ENCODE measurements at regions of chr17 and their contacts with region 1.

Region 1: GRCh38 chr17:38421171-38421841 is 7.0 kb upstream of the ARHGAP23 start:
- H3K4me3 ChIP-seq: no peak overlapping the region
- H3K27ac ChIP-seq: no peak overlapping the region
- H3K4me1 ChIP-seq: no peaks in the 10 kb centered on the region; the same call in 1 of the 2 replicates
- CTCF ChIP-seq: no peak

Region 2: DNA sequence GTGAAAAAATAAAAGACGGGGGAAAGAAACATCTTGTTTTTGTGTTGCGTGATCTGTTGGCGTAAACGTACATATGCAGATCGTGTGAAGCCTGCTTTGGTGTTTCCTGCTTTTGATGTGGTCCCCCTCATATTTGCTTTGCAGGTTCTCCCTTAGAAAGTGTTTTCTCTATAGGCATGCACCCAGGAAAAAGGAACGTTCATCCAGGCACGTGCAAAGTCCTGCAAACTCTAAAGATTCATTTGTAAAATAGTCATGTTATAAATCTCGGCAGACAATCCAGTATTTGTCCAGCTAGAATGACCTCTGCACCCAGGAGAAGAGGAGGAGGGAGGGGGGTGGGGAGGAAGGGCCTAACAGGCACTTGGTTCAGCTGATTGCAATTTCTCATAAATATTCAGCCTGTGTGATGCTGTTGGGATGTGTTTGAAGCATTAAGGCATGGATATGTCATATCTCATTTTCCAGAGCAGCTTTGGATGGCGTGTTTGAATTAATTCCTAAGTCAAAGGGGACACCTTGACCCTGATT is 737.8 kb before region 1 on chr17:
- CTCF ChIA-PET with region 1: no interaction called
- POLR2A ChIA-PET with region 1: no interaction called
- H3K4me3 ChIP-seq: no peak overlapping the region
- H3K27ac ChIP-seq: no peak overlapping the region
- H3K4me1 ChIP-seq: no peaks in the 10 kb centered on the region
- CTCF ChIP-seq: no peak

Region 3: DNA sequence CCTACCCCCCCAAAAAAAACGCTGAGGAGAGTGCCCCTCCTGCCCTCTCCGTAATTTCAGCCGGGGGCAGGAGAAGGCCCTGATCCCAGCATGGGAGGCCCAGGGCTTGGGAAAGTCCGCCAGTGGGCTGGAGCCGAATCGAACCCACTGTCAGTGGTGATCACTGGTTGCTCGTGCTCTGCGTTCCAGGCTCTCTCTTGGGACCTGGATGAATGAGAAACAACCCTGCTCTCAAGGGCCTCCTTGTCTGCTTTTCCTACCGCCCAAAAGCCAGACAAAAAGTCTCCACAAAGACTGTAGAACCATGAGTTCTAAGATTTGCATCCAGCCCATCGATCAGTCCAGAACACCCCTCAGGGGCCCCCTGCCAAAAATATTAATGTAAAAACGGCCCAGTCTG is 15.1 kb after region 1 on chr17:
- CTCF ChIA-PET with region 1: interaction called, 52 read pairs
- POLR2A ChIA-PET with region 1: interaction called, 4 read pairs
- H3K4me3 ChIP-seq: no peak overlapping the region
- H3K27ac ChIP-seq: no peak overlapping the region
- H3K4me1 ChIP-seq: no peaks in the 10 kb centered on the region
- CTCF ChIP-seq: no peak

Region 4: GRCh38 chr17:38454516-38454915 is 33.2 kb after region 1 on chr17:
- CTCF ChIA-PET with region 1: interaction called, 10 read pairs
- POLR2A ChIA-PET with region 1: no interaction called
- H3K4me3 ChIP-seq: no peak overlapping the region
- H3K27ac ChIP-seq: no peak overlapping the region
- H3K4me1 ChIP-seq: peaks cover 9% of the 10 kb centered on the region
- CTCF ChIP-seq: no peak

Region 5: GRCh38 chr17:38469875-38470274 is 48.6 kb after region 1 on chr17:
- CTCF ChIA-PET with region 1: interaction called, 15 read pairs
- POLR2A ChIA-PET with region 1: no interaction called
- H3K4me3 ChIP-seq: no peak overlapping the region
- H3K27ac ChIP-seq: no peak overlapping the region
- H3K4me1 ChIP-seq: peaks cover 8% of the 10 kb centered on the region; the same call in 1 of the 2 replicates
- CTCF ChIP-seq: no peak

Region 6: DNA sequence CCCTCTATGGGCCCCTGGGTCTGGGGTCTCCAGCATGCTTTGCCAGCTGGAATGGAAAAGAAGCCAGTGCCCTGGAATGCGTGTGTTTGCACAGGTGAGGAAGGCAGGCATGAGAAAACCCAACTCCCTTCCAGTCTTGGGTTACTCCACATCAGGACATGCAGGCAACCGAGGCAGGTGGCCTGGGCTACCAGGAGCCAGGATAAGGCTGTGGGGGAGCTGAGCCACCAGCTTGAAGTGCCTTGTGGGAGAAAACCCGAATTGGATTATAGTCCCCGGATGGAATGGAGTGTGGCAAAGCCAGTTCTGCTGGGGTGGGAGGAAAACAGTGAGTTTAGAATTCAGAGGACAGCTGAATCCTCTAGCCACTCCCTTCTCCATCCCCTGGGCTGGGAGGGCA is 177.2 kb after region 1 on chr17:
- CTCF ChIA-PET with region 1: no interaction called
- POLR2A ChIA-PET with region 1: no interaction called
- H3K4me3 ChIP-seq: no peak overlapping the region
- H3K27ac ChIP-seq: no peak overlapping the region
- H3K4me1 ChIP-seq: peaks cover 18% of the 10 kb centered on the region
- CTCF ChIP-seq: no peak

Region 7: DNA sequence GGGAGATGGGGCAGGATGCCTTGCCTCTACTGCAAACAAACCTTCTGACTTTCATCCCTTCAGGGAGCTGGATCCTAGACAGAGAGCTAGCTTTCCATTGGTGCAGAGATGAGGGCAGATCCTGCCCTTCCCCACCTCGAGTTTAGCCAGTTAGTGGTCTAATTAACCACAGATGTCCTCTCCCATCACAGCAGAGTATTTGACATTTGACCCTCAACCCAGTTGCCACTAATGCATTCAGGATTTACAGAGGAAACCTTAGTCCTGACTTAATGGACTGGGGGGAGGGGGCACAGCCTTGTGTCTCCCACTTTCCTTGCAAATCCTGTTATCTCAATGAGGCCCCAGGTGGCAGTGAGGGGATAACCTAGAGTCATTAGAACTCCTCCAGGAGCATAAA is 367.9 kb after region 1 on chr17:
- CTCF ChIA-PET with region 1: no interaction called
- POLR2A ChIA-PET with region 1: no interaction called
- H3K4me3 ChIP-seq: no peak overlapping the region
- H3K27ac ChIP-seq: no peak overlapping the region
- H3K4me1 ChIP-seq: peaks cover 6% of the 10 kb centered on the region; the same call in 1 of the 2 replicates
- CTCF ChIP-seq: no peak